ENCODE measurements at regions of chr9 and their contacts with region 1.

Region 1: DNA sequence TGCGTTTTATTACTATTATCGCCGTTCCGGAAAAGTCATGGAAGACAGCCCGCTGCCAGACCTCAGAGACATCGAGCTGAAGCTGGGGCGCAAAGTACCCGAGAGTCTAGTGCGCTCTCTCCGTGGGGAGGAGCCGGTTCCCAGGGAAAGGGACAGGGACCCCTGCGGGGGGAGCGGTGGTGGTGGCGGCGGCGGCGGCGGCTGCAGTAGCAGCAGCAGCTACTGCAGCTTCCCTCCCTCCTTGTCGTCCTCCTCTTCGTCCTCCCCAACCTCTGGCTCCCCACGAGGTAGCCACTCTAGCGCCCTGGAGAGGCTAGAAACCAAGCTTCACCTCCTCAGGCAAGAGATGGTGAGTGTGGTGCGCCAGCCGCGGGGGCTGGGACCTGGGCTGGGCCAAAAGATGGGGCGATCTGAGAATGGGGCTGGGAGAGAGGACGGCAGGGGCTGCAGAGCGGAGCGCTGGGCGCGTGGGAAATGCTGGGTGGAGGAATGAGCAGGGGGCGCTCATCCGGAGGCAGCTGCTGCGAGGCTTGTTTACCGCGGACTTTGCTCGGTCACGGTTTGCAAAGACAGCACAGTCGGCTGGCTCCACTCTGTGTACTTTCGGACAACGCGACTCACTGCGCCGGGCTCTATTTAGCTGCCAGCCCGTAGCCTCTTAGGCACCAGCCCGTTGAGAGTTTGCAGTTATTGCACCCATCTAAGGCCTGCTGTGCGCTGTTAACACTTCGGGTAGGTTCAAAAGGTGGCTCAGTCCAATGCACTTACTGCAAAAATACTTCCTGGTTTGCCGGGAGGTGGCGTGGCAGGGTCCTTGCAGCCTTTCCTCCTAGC is 1.1 kb downstream of the LURAP1L start:
- DNase-seq: peak; percentile 38 to 83 (median 58)
- ATAC-seq: peak; percentile 59 to 96 (median 90)
- H3K4me3 ChIP-seq: peak overlapping the region; percentile 66 to 89 (median 80)
- H3K27ac ChIP-seq: peak overlapping the region; percentile 79 to 92 (median 86)
- H3K4me1 ChIP-seq: peaks cover 0 to 30% (median 7%) of the 10 kb centered on the region in 12 donors
- H3K27me3 ChIP-seq: no peaks in the 10 kb centered on the region
- CTCF ChIP-seq: peak; percentile 26 to 69 (median 47)
- POLR2A ChIP-seq: no peak

Region 2: GRCh38 chr9:12719431-12719830 is 56.5 kb before region 1 on chr9:
- intact Hi-C with region 1: loop called in 6 of 10 experiments (anchors 5 to 10 kb)
- DNase-seq: no peak
- ATAC-seq: peak in 3 of 4 donors; percentile 36 to 69 (median 38)
- H3K4me3 ChIP-seq: no peak overlapping the region
- H3K27ac ChIP-seq: no peak overlapping the region
- H3K4me1 ChIP-seq: peaks cover 0 to 5% (median 0%) of the 10 kb centered on the region in 12 donors
- H3K27me3 ChIP-seq: no peaks in the 10 kb centered on the region
- CTCF ChIP-seq: peak; percentile 28 to 67 (median 54)
- POLR2A ChIP-seq: no peak

Region 3: DNA sequence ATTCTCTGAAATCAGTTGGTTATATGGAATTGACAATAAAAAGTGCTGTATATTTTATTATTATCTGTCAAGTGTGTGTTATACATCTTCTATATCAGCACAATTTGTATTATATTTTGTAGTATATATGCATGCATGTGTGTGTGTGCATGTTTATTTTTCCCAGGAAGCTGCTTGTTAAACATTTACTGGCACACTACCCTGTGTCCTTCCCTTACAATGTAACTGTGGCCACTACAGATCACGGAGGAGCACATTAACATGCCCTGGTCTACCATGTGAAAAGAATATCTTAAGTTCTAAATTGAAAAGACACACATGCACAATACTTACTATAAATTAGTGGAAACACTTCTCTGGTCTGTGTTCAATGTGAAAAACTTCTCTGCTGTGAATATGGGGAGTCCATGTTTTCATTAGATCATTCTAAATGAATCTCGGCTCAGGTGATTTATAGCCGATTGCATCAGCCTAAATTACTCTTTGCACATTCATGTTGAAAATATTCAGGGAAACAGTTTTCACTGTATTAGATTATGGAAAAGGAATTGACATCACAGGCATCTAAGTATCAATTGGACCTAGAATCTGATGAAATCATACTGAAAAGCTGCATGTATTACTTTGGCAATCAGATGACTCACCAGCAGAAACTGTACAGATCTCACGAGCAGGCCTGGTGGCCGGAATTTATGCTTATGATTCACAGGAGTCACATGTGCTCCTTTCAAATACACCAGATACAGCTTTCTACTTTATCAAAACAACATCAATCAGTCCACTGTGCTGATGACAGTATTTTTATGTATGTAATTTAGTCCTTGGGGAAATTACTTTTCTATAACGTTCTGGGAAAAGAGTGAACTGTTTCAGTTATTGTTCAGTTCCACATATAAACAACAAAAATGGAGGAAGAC is 38.3 kb after region 1 on chr9:
- intact Hi-C with region 1: loop called in 5 of 10 experiments (anchors 2 to 5 kb)
- DNase-seq: peak in 3 of 5 donors; percentile 16 to 47 (median 27)
- ATAC-seq: peak; percentile 72 to 91 (median 80)
- H3K4me3 ChIP-seq: peak overlapping the region in 5 of 12 donors; percentile 6 to 17 (median 13)
- H3K27ac ChIP-seq: peak overlapping the region in 10 of 12 donors; percentile 4 to 75 (median 50)
- H3K4me1 ChIP-seq: peaks cover under 1 to 49% (median 14%) of the 10 kb centered on the region in 12 donors
- H3K27me3 ChIP-seq: no peaks in the 10 kb centered on the region
- CTCF ChIP-seq: peak in 4 of 12 donors; percentile 8 to 38 (median 24)
- POLR2A ChIP-seq: no peak

Region 4: DNA sequence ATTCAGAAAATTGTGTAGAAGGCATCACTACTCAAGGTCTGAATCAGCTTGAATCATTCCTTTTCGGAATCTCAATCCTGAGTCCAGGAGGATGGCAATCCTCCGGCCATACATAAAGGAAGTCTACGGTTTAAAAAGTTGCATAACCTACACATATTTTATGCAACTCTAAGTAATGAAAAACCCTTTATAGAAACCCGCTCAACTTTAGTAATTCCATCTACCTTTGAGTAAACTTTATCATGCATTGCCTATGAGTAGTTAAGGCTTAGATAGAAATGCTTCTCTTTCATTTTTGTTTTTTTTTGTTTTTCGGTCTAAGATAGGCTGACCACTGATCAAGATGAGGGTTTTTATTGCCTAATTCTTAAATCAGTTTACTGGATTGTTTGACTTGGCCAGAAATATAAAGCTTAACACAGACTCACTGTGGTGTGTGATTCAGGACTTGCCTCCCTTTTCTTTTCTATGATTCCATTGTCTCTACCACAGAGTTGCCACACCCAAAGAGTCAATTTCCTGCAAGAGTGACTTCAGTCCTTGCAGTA is 83.9 kb after region 1 on chr9:
- intact Hi-C with region 1: loop called in 1 of 10 experiments (anchors 5 kb)
- DNase-seq: no peak
- ATAC-seq: peak in 3 of 4 donors; percentile 67 to 81 (median 69)
- H3K4me3 ChIP-seq: no peak overlapping the region
- H3K27ac ChIP-seq: peak overlapping the region in 1 of 12 donors; percentile 28
- H3K4me1 ChIP-seq: peaks cover 0 to 22% (median 4%) of the 10 kb centered on the region in 12 donors
- H3K27me3 ChIP-seq: no peaks in the 10 kb centered on the region
- CTCF ChIP-seq: no peak
- POLR2A ChIP-seq: no peak

Region 5: GRCh38 chr9:12884737-12885414 is 109.0 kb after region 1 on chr9:
- intact Hi-C with region 1: loop called in 5 of 10 experiments (anchors 2 to 5 kb)
- DNase-seq: no peak
- ATAC-seq: peak in 3 of 4 donors; percentile 57 to 68 (median 58)
- H3K4me3 ChIP-seq: no peak overlapping the region
- H3K27ac ChIP-seq: no peak overlapping the region
- H3K4me1 ChIP-seq: peaks cover 0 to 17% (median 2%) of the 10 kb centered on the region in 12 donors
- H3K27me3 ChIP-seq: no peaks in the 10 kb centered on the region
- CTCF ChIP-seq: peak; percentile 17 to 74 (median 57)
- POLR2A ChIP-seq: no peak

Region 6: DNA sequence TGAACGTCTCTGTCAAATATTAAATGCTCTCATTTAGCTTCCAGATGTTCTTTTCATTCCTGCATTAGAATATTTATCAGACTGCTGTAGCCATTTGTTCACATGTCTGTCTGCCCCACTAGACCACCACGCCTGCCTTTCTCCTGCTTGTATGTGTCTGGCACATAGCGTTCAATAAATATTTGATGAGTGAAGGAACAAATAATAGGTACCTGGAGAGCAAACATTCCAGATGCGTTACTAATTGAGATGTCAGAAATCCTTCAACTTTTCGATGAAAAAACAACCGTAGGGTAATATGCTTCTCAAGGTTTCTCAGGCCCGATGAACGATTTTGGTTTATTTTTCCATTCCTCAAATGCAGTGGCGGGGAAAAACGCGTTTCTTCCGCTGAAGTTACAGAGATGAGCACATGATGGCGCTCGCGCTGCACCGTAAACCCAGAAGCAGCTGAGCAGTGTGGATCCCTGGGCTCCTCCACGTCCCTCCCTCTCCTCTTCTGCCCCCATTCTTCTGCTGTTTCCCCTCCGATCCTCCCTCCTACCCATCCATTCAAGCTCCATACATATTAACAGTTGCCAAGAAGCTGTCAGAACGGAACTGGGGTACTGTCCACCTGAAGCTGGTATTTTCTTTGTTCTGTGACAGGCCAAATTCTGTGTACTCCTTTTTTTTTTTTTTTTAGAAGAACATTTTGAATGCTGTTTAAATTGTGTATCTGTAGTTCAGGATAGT is 258.2 kb after region 1 on chr9:
- intact Hi-C with region 1: loop called in 1 of 10 experiments (anchors 1 kb)
- DNase-seq: peak; percentile 36 to 59 (median 53)
- ATAC-seq: peak; percentile 77 to 94 (median 88)
- H3K4me3 ChIP-seq: peak overlapping the region in 9 of 12 donors; percentile 11 to 49 (median 26)
- H3K27ac ChIP-seq: no peak overlapping the region
- H3K4me1 ChIP-seq: peaks cover 0 to 6% (median 0%) of the 10 kb centered on the region in 12 donors
- H3K27me3 ChIP-seq: no peaks in the 10 kb centered on the region
- CTCF ChIP-seq: peak; percentile 54 to 81 (median 72)
- POLR2A ChIP-seq: no peak